Naive thymus-derived CD8-positive, alpha-beta T cell (primary cell): ENCODE measurements at regions of chr6 and their contacts with region 1.

Region 1: GRCh38 chr6:35611240-35611639 is 77.5 kb downstream of the FKBP5 start:
- DNase-seq: peak in 4 of 10 donors; percentile 54 to 68 (median 62)
- ATAC-seq: peak; percentile 76 to 92
- H3K4me3 Mint-ChIP-seq: peak overlapping the region; percentile 52 to 85 (median 72)
- H3K27ac Mint-ChIP-seq: peak overlapping the region; percentile 88 to 97 (median 92)
- H3K4me1 Mint-ChIP-seq: peaks cover 33 to 89% (median 78%) of the 10 kb centered on the region in 4 donors
- H3K27me3 Mint-ChIP-seq: no peaks in the 10 kb centered on the region

Region 2: DNA sequence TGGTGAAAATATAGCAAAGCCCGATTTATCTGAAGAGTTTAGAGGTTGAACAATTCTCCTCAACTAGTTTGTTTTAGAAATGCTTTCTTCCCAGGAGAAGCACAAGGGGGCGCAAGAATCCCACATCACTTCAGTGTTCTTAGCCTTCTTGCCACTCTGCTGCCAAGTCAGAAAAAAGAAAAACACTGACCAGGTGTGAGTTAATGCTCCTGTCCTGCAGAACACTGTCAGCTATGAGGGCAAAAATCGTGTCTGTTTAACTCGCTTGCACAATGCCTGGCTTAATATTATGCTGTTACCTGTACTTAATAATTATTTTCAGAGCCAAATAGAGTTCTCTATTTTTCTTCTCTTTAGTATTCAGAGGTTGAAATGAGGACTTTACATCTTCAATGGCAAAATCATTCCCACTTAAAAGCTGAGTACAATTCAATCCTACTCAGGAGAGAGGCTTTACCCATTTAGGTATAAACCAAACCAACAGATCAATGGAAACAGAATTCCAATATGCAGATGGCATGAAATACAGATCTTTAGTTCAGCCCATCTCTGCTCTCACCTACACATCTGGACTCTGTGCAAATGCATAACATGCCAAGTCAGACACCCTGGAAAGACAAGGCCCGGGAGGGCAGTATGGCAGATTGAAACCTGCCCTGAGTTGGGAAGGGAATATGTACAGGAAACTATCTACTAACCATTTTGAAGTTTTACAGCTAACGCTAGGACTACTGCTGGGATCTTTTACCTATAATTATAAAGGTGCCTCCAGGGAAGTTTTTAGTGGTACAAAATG is 27.1 kb before region 1 on chr6:
- POLR2A ChIA-PET with region 1: interaction called, 230 read pairs
- DNase-seq: peak; percentile 58 to 85 (median 74)
- ATAC-seq: peak; percentile 66 to 69
- H3K4me3 Mint-ChIP-seq: peak overlapping the region in 7 of 10 donors; percentile 30 to 65 (median 57)
- H3K27ac Mint-ChIP-seq: peak overlapping the region; percentile 87 to 95 (median 90)
- H3K4me1 Mint-ChIP-seq: peaks cover 30 to 77% (median 60%) of the 10 kb centered on the region in 4 donors
- H3K27me3 Mint-ChIP-seq: no peaks in the 10 kb centered on the region

Region 3: DNA sequence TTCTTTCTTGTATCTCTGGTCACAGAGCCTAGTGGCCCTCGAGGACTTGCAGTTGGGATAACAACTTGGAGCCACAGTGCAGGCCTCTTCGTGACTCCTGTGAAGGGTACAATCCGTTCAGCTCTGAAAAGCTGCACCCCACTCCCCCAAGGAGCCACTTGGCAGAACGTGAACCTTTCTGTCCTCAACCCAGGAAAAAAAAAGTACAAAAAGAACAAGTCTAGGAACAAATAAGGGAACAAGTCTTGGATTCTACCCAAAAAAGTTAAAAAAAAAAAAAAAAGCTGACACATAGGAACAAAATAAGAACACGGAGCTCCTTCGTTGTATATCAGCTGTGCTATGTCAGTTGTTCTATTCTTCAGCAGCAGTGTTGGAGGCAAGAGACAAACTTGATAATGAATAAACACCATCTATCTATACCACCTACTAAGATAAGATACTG is 20.6 kb before region 1 on chr6:
- POLR2A ChIA-PET with region 1: interaction called, 230 read pairs
- DNase-seq: no peak
- ATAC-seq: no peak
- H3K4me3 Mint-ChIP-seq: peak overlapping the region in 9 of 10 donors; percentile 22 to 69 (median 44)
- H3K27ac Mint-ChIP-seq: peak overlapping the region; percentile 78 to 96 (median 94)
- H3K4me1 Mint-ChIP-seq: peaks cover 32 to 96% (median 91%) of the 10 kb centered on the region in 4 donors
- H3K27me3 Mint-ChIP-seq: no peaks in the 10 kb centered on the region

Region 4: DNA sequence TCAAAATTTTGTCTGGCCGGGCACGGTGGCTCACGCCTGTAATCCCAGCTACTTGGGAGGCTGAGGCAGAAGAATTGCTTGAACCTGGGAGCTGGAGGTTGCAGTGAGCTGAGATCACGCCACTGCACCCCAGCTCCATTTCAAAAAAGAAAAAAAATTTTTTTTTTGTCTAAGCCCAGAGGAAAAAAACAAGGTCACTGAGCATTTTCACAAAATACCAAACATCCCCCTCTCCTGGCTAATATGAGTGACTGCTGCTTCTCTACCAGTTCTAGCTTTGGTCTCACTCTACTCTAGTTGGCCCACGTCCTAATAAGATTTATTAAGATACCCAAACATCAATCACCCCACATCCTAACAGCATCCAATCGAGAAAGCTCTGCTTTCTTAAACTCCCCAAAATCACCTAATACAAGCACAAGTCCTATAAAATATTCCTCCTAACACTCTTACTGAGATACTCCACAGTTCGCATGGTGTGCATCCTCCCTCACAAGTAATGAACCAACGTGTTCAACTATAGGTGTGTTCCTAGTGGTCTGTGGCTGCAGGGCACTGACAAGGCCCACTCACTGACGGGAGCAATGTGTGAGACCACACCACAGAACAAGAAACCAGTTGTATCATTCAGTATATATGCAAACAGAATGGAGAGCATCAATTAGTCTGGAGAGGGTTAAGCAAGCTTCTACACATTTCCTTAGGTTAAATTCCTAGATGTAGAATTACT is 13.3 kb after region 1 on chr6:
- POLR2A ChIA-PET with region 1: interaction called, 242 read pairs
- DNase-seq: peak in 4 of 10 donors; percentile 29 to 72 (median 66)
- ATAC-seq: peak; percentile 77 to 87
- H3K4me3 Mint-ChIP-seq: peak overlapping the region in 8 of 10 donors; percentile 7 to 52 (median 34)
- H3K27ac Mint-ChIP-seq: peak overlapping the region; percentile 76 to 93 (median 84)
- H3K4me1 Mint-ChIP-seq: peaks cover 15 to 61% (median 49%) of the 10 kb centered on the region in 4 donors
- H3K27me3 Mint-ChIP-seq: no peaks in the 10 kb centered on the region

Region 5: DNA sequence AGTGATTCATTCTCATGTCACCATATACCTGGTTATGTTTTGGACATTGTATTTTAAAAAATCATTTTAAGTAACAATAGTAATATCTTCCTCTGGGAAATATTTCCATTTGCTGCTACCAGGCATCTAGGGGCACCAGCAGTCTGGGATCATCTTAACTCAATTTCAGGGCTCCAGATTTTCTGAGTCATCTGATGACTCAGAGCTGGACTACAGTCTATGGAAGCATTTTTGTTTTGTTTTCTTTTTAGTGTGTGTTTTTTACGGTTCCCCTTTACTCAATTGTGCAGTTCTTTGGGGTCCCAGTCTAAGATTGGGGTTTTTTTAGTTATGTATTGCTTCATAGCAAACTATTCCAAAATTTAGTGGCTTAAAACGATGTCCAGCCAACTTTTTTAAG is 83.2 kb after region 1 on chr6:
- POLR2A ChIA-PET with region 1: no interaction called
- DNase-seq: no peak
- ATAC-seq: no peak
- H3K4me3 Mint-ChIP-seq: no peak overlapping the region
- H3K27ac Mint-ChIP-seq: peak overlapping the region in 1 of 10 donors; percentile 16
- H3K4me1 Mint-ChIP-seq: peaks cover 0 to 8% (median 5%) of the 10 kb centered on the region in 4 donors
- H3K27me3 Mint-ChIP-seq: no peaks in the 10 kb centered on the region